Activated T-helper 2 cell treated with anti-CD3 and anti-CD28 coated beads, Interferon-gamma antibody, Interleukin-2, Interleukin-4, amounts not matched to agents 10 μg/mL and 5 μg/mL and 100 μg/mL, durations not matched to agents 14 hours and 24 hours and 36 hours (primary cell): ENCODE measurements at regions of chr3 and their contacts with region 1.

Region 1: DNA sequence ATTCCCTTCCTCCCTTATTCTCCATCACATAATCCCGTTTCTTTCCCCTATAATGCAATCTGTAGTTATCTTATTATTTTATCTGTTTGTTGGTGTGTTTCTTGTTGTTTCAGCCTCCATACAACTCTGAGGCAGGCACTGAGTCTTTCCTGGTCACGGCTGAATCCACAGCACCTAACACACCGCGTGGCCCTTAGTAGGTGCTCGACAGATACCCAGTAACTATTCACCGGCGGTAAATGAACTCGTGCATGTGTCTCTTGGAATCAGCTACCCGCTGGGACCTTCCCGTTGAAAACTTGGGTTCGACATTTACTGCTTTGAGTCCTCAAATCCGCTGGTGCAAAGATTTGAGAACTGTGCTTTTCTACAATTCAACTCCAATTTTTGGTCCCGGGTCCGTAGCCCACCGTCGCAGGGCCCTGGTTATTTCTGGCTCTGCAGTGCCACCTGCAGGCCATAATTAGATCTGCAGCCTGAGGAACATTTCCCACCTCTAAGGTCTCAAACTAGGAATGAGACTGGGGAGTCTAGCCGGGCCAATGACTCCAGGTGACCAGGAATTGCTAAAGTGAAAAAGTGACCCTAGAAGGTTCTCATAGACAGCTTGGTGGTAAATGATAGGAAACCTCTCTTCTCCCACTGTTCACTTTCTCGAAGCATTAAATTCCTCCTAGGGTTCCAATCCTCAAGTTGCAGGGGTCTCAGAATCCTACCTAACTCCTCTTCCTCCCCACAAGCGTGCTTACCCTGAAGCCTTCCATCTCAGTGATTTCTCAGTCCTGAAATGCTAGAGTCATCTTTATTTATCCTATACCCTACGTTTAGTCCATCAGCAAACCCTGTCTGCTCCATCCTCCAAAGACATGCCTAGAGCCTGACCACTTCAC is 40.0 kb upstream of the TRH start:
- DNase-seq: no peak
- H3K4me3 Mint-ChIP-seq: no peak overlapping the region
- H3K27ac Mint-ChIP-seq: no peak overlapping the region
- H3K4me1 Mint-ChIP-seq: peaks cover 7% of the 10 kb centered on the region
- H3K27me3 Mint-ChIP-seq: peaks cover 3% of the 10 kb centered on the region

Region 2: DNA sequence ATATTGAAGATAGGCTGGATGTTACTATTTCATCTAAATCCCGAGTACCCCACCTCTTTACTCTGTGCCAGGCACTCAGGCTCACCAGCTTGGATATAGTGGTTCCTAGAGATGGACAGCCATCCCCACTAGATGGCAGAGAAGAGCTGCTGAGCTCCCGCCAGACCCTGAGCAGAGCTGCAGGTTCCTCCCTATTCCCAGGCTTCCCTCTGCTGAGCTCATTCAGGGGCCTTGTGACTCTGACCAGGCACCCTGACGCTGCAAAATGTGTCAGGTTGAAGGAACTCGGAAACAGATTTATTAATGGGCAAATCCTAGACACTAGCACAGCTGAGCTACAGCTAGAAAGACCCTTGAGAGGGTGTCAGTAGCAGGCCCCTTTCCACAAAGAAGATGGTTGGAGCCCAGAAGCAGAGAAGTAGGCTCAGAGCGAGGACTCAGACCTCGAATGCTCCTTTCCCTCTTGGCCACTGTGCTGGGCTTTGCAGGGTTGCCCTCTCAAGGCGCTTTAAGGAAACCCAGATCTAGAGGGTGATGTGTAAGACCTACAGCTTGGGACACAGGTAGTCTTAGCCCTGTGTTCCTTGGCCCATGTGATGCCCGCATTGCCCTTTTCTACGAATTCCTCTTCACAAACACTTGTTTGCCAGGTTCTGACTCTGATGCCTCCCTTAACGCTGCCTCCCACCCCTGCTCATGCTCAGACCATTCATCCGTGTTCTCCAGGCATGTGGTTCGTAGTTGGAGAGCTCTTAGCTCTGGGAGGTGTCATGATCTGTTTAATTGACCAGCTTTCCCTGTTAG is 444.0 kb before region 1 on chr3:
- intact Hi-C with region 1: loop called (anchors 1 kb)
- DNase-seq: peak; percentile 20
- H3K4me3 Mint-ChIP-seq: no peak overlapping the region
- H3K27ac Mint-ChIP-seq: no peak overlapping the region
- H3K4me1 Mint-ChIP-seq: no peaks in the 10 kb centered on the region
- H3K27me3 Mint-ChIP-seq: no peaks in the 10 kb centered on the region

Region 3: GRCh38 chr3:129650256-129650872 is 284.1 kb before region 1 on chr3:
- intact Hi-C with region 1: loop called (anchors 1 kb)
- DNase-seq: peak; percentile 34
- H3K4me3 Mint-ChIP-seq: no peak overlapping the region
- H3K27ac Mint-ChIP-seq: no peak overlapping the region
- H3K4me1 Mint-ChIP-seq: peaks cover 2% of the 10 kb centered on the region
- H3K27me3 Mint-ChIP-seq: peaks cover 8% of the 10 kb centered on the region